Calu3 (cell line): ENCODE measurements at regions of chr13 and their contacts with region 1.

Region 1: DNA sequence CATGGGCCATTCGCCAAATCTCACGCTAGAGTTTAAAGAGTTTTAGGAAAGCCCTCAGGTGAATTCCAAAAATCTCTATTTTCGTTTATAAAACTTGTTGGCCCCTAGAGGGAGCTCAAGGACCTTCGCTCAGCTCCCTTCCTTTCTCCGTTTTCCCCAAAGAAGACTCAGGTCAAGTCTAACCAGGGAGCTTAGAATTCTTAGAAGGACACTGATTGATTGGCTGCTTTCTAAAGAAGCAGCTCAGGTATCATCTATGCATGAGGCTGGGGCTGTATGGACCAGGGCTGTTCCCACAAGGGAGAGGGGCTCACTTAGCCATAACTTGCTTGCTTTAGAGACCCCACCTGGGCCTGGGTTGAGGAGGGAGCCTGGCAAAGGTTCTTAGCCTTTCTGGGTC is 20.5 kb downstream of the DZIP1 start:
- DNase-seq: no peak
- H3K4me3 Mint-ChIP-seq: no peak overlapping the region
- H3K27ac Mint-ChIP-seq: no peak overlapping the region
- H3K4me1 Mint-ChIP-seq: no peaks in the 10 kb centered on the region
- H3K27me3 Mint-ChIP-seq: no peaks in the 10 kb centered on the region
- CTCF ChIP-seq: no peak

Region 2: GRCh38 chr13:95516021-95516420 is 108.0 kb before region 1 on chr13:
- CTCF ChIA-PET with region 1: no interaction called
- intact Hi-C with region 1: no loop called
- DNase-seq: no peak
- H3K4me3 Mint-ChIP-seq: no peak overlapping the region
- H3K27ac Mint-ChIP-seq: no peak overlapping the region
- H3K4me1 Mint-ChIP-seq: peaks cover 6% of the 10 kb centered on the region
- H3K27me3 Mint-ChIP-seq: no peaks in the 10 kb centered on the region
- CTCF ChIP-seq: no peak

Region 3: GRCh38 chr13:95660981-95661581 is 37.1 kb after region 1 on chr13:
- CTCF ChIA-PET with region 1: interaction called, 4 read pairs
- intact Hi-C with region 1: loop called (anchors 5 kb)
- DNase-seq: peak; percentile 8
- H3K4me3 Mint-ChIP-seq: no peak overlapping the region
- H3K27ac Mint-ChIP-seq: no peak overlapping the region
- H3K4me1 Mint-ChIP-seq: no peaks in the 10 kb centered on the region
- H3K27me3 Mint-ChIP-seq: no peaks in the 10 kb centered on the region
- CTCF ChIP-seq: no peak

Region 4: DNA sequence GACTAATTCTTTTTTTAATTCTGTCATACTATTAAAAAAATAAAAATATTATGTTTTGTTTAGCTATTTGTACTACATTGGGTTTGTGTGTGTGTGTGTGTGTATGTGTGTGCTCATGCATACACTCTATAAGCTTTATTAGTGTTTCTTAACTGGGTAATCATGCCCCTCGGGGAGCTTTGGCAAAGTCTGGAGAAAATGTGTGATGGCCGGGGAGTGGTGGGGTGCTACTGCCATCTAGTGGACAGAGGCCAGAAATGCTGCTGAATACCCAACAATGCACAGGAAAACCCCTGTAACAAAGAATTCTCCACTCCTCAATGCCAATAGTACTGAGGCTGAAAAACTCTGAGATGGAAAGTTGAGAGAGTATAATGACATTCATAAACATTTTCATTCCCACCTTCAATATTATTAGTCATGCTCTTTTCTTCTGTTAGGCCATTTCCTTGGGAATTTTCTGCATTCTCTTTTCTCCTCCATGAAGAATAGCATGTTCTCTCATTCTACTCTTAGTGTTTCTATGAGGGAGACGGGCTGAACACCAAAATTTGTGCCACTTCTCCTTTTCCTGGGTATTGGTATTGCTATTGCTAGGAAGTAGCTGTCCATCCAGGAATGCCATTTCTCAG is 210.2 kb after region 1 on chr13:
- CTCF ChIA-PET with region 1: interaction called, 12 read pairs
- intact Hi-C with region 1: loop called (anchors 1 kb)
- DNase-seq: peak; percentile 36
- H3K4me3 Mint-ChIP-seq: no peak overlapping the region
- H3K27ac Mint-ChIP-seq: no peak overlapping the region
- H3K4me1 Mint-ChIP-seq: no peaks in the 10 kb centered on the region
- H3K27me3 Mint-ChIP-seq: no peaks in the 10 kb centered on the region
- CTCF ChIP-seq: peak; percentile 32

Region 5: DNA sequence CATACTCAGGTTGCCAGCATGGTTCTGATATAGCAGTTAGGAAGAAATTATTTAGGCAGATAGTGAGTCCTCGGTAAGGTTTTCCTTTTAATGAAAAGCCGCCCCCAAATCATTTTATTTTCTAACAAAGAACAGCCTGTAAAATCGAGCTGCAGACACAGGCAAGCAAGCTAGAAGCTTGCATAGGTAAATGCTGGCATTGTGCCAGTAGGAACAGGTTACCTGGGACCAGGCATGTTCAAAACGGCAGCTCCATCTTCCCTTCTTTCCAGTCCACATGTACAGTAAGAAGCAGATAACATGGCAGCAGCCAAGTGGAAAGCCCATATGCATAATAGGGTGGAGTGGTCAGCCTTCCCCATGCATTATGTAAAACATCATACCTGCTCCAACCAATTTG is 358.1 kb after region 1 on chr13:
- CTCF ChIA-PET with region 1: no interaction called
- intact Hi-C with region 1: loop called (anchors 10 kb)
- DNase-seq: no peak
- H3K4me3 Mint-ChIP-seq: no peak overlapping the region
- H3K27ac Mint-ChIP-seq: no peak overlapping the region
- H3K4me1 Mint-ChIP-seq: no peaks in the 10 kb centered on the region
- H3K27me3 Mint-ChIP-seq: no peaks in the 10 kb centered on the region
- CTCF ChIP-seq: no peak